ENCODE measurements at regions of chr14 and their contacts with region 1.

Region 1: DNA sequence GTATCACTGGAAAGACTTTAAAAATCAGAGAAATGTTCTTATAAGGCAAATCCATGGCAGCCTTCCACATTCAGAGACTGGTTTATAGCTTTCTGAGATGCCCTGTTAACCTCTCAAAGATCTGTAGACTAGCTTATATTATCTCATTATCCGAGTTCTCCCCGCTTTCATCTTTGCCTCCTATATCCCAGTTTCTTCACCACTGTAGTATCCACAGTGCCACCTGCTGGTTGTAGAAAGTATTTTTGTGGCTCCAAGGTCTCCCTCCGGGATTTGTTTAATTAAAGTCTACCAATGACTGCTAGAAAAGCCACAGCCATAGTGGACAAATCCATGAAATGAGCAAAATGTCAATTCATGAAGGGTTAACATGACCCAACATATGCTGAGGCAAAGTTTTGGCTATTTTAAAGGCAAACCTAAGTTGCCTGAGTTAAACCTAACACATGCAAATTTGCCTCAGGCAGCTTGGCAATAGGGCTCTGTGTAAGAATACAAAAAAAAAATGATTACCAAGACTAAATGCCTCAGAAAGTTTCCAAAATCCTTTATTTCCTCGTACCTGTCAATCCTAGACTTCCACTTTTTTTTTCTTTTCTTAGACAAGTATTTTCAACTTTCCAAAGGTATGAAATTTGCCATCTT is 218.8 kb upstream of the BMP4 start:
- DNase-seq: peak; percentile 44
- CTCF ChIP-seq: peak; percentile 52

Region 2: DNA sequence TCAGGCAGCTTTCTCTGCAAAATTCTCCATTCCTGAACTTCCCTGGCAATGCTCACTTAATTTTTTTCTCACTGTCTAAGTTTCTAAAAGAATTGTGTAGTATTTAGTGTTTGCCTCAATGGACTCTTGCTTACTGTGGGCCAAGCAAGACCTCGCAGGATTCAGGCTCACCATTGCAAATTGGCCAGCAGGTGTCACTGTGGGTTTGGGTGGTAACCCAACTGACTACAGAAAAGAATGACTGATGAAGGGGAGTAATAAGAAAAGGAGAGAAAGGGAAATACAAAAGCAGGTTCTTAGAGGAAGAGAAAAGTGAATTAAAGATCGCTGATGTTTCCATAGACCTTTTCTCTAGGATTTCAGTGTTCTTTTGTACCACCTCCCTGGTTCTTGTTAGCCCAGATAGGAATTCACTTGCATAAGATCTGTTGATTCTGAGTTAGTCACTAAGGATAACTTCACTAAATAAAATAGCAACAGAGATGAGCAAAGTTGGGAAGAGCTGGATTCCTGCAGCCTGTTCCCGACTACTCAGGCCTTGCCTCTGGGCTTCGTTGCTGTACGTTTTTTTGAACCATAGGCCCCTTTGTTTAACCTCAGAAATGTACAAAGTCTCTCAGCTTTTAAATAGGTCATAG is 635.8 kb before region 1 on chr14:
- in situ Hi-C with region 1: loop called (anchors 10 kb)
- DNase-seq: peak; percentile 31
- CTCF ChIP-seq: peak; percentile 74

Region 3: GRCh38 chr14:54241517-54241916 is 66.1 kb after region 1 on chr14:
- in situ Hi-C with region 1: no loop called
- DNase-seq: no peak
- CTCF ChIP-seq: no peak

Region 4: GRCh38 chr14:54516734-54517133 is 341.3 kb after region 1 on chr14:
- in situ Hi-C with region 1: no loop called
- DNase-seq: no peak
- CTCF ChIP-seq: no peak

Measured in GM13976 (cell line).